Activated naive CD4-positive, alpha-beta T cell treated with anti-CD3 and anti-CD28 coated beads for 36 hours (primary cell): ENCODE measurements at regions of chr2 and their contacts with region 1.

Region 1: GRCh38 chr2:219155054-219155644 is 5.5 kb downstream of the NHEJ1 start:
- DNase-seq: peak; percentile 40
- H3K4me3 Mint-ChIP-seq: no peak overlapping the region
- H3K27ac Mint-ChIP-seq: no peak overlapping the region
- H3K4me1 Mint-ChIP-seq: peaks cover 7% of the 10 kb centered on the region
- H3K27me3 Mint-ChIP-seq: no peaks in the 10 kb centered on the region

Region 2: DNA sequence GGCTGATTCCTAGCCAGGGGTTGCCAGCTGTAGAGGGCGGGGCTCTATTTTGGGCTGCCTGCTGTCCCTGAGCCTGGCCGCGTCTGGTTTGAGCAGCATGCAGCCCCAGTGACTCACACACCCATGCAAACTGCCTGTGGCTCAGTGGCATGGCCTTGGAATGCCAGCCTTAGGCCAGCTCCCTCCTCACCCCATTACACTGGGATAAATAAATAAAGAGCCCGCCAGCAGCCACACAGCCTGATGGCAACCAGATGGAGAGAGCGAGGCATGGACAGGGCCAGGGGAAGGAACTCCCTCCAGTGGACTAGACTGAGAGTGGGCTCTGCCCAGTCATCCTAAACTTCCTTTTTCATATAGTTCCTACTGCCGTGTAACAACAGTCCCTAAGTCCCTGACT is 12.8 kb before region 1 on chr2:
- CTCF ChIA-PET with region 1: interaction called, 11 read pairs
- intact Hi-C with region 1: no loop called
- DNase-seq: no peak
- H3K4me3 Mint-ChIP-seq: no peak overlapping the region
- H3K27ac Mint-ChIP-seq: no peak overlapping the region
- H3K4me1 Mint-ChIP-seq: no peaks in the 10 kb centered on the region
- H3K27me3 Mint-ChIP-seq: no peaks in the 10 kb centered on the region

Region 3: GRCh38 chr2:219171231-219171651 is 16.1 kb after region 1 on chr2:
- CTCF ChIA-PET with region 1: interaction called, 67 read pairs
- intact Hi-C with region 1: no loop called
- DNase-seq: peak; percentile 51
- H3K4me3 Mint-ChIP-seq: no peak overlapping the region
- H3K27ac Mint-ChIP-seq: no peak overlapping the region
- H3K4me1 Mint-ChIP-seq: peaks cover 25% of the 10 kb centered on the region
- H3K27me3 Mint-ChIP-seq: no peaks in the 10 kb centered on the region